WTC11 (cell line): ENCODE measurements at regions of chr1 and their contacts with region 1.

Region 1: DNA sequence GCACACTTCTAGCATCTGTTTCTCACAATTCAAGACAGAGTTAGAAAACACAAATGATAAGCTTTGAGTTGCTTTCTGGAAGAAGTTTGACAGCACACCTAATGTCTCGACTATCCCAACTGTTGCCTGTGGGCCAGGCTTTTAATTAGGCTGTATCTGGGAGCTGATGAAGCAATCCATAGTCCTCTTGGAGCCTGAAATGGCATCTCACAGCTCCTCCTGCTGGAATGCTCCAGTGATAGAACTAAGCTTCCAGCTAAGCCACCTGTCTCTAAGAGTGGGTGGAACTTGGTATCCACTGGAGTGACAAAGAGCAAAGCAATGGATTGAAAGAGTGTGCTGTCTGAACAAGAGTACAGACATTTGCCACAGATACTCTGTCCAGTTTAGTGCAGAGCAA is 605.3 kb upstream of the NR5A2 start:
- DNase-seq: peak; percentile 44
- ATAC-seq: peak; percentile 100
- H3K4me3 Mint-ChIP-seq: no peak overlapping the region
- H3K27ac Mint-ChIP-seq: no peak overlapping the region
- H3K4me1 Mint-ChIP-seq: no peaks in the 10 kb centered on the region
- H3K27me3 Mint-ChIP-seq: no peaks in the 10 kb centered on the region
- CTCF ChIP-seq: no peak

Region 2: DNA sequence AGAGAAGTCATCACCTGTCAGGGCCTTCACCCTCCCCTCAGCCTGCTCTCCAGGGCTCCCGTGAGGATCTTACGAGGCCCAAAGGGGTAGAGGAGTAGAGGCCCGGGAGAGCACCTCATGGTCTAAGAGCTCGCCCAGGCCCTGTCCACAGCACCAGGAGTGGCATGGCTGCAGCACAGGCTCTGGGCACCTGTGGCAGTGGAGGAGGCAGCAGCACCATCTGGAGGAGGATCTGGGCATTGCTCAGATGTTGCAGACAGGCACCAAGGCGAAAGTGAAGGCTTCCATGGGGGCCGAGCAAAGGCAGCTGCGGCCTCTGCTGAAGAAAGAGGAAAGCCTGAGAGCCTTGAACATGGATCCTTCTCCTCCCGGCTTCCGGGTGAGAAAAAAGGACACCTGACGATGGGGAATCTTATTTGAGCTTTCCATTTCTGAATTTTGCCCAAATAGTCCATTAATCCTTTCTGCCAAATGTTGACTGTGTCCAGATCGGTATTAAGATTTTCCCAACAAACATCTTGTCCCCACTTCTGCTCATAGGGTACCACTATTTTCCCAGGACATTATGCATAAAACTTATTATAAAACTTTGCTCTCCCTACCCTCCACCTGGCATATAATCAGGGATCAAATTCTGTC is 178.7 kb before region 1 on chr1:
- CTCF ChIA-PET with region 1: interaction called, 10 read pairs
- POLR2A ChIA-PET with region 1: no interaction called
- DNase-seq: peak; percentile 84
- ATAC-seq: peak; percentile 100
- H3K4me3 Mint-ChIP-seq: no peak overlapping the region
- H3K27ac Mint-ChIP-seq: no peak overlapping the region
- H3K4me1 Mint-ChIP-seq: peaks cover 8% of the 10 kb centered on the region
- H3K27me3 Mint-ChIP-seq: no peaks in the 10 kb centered on the region
- CTCF ChIP-seq: peak; percentile 65

Region 3: DNA sequence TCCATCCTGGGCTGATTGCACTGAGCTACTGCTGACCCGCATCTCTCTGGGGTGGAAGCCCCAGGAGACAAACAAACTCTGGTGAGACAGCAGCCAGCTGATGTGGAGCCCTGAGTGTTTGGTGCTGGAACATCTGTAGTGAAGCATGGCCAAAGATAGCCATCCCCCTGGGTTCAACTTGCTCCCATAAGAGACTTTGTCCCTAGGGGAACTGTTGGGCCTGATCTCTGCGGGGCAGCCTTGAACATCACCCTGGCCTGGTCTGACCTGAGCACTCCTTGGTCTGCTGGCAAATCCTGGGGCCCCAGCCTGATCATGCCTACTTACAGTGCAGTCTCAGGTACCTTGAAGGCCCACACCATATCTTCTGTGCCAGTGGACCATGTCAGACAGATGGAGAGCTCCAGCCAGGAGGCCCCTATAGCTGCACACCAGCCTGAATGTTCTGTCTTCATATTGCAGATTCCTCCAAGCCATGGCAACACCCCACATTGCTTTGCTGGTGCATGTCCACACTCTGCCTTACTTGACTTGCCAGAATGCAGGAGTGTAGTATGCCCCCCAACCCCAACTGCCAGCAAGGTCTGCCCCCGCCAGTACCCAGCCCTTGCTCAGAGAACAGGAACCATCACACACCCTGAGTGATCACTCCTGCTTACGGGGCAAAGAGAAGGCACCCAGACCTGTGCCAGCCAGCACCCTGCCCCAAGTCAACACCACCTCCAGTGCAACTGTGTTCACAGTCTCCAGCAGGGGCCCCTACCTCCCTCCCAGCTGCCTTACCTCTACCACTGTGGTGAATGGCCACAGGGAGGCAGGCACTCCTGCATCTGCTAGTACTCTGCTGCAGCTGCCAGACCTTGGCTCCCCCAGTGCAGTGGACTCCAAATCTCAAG is 85.2 kb before region 1 on chr1:
- CTCF ChIA-PET with region 1: interaction called, 25 read pairs
- POLR2A ChIA-PET with region 1: no interaction called
- DNase-seq: peak; percentile 50
- ATAC-seq: peak; percentile 99
- H3K4me3 Mint-ChIP-seq: no peak overlapping the region
- H3K27ac Mint-ChIP-seq: no peak overlapping the region
- H3K4me1 Mint-ChIP-seq: no peaks in the 10 kb centered on the region
- H3K27me3 Mint-ChIP-seq: no peaks in the 10 kb centered on the region
- CTCF ChIP-seq: no peak

Region 4: GRCh38 chr1:199447906-199448305 is 25.7 kb after region 1 on chr1:
- CTCF ChIA-PET with region 1: no interaction called
- POLR2A ChIA-PET with region 1: no interaction called
- DNase-seq: no peak
- ATAC-seq: no peak; the same call in 1 of the 2 replicates
- H3K4me3 Mint-ChIP-seq: no peak overlapping the region
- H3K27ac Mint-ChIP-seq: no peak overlapping the region
- H3K4me1 Mint-ChIP-seq: peaks cover 8% of the 10 kb centered on the region; the same call in 1 of the 2 replicates
- H3K27me3 Mint-ChIP-seq: peaks cover 4% of the 10 kb centered on the region; the same call in 1 of the 2 replicates
- CTCF ChIP-seq: no peak

Region 5: DNA sequence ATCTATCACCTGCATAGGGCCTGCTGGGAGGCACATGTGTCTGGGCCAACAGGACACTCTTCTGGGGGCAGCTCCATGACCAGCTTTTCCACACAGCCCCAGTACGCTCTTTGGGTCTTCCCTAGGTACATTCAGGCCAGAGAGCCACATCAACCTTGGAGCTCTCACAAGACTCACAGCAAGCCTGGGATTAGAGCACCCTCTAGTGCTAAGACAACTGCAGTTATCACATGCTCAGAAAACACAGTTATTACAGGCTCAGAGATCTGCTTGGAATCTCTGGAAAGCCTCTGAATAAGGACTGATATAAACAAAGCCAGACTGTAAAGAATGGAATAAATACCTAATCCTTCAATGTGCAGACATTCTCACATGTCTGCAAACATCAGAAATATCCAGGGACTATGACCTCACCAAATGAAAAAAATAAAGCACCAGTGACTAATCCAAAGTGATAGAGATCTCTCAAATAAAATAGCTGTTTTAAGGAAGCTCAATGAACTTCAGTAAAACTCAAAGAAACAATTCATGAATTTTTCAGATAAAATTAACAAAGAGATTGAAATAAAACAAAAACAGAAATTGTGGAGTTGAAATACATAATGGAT is 41.4 kb after region 1 on chr1:
- CTCF ChIA-PET with region 1: interaction called, 18 read pairs
- POLR2A ChIA-PET with region 1: no interaction called
- DNase-seq: peak; percentile 51
- ATAC-seq: peak; percentile 99
- H3K4me3 Mint-ChIP-seq: no peak overlapping the region
- H3K27ac Mint-ChIP-seq: no peak overlapping the region
- H3K4me1 Mint-ChIP-seq: no peaks in the 10 kb centered on the region
- H3K27me3 Mint-ChIP-seq: no peaks in the 10 kb centered on the region
- CTCF ChIP-seq: no peak